Panc1 (cell line): ENCODE measurements at regions of chr19 and their contacts with region 1.

Region 1: GRCh38 chr19:8396563-8397203 is 6.5 kb downstream of the RAB11B start:
- DNase-seq: peak; percentile 18
- ATAC-seq: peak; percentile 63
- H3K4me3 ChIP-seq: no peak overlapping the region
- H3K27ac ChIP-seq: peak overlapping the region; percentile 75
- H3K4me1 ChIP-seq: peaks cover 62% of the 10 kb centered on the region
- H3K27me3 ChIP-seq: no peaks in the 10 kb centered on the region
- CTCF ChIP-seq: peak; percentile 85; the same call in 1 of the 2 replicates

Region 2: DNA sequence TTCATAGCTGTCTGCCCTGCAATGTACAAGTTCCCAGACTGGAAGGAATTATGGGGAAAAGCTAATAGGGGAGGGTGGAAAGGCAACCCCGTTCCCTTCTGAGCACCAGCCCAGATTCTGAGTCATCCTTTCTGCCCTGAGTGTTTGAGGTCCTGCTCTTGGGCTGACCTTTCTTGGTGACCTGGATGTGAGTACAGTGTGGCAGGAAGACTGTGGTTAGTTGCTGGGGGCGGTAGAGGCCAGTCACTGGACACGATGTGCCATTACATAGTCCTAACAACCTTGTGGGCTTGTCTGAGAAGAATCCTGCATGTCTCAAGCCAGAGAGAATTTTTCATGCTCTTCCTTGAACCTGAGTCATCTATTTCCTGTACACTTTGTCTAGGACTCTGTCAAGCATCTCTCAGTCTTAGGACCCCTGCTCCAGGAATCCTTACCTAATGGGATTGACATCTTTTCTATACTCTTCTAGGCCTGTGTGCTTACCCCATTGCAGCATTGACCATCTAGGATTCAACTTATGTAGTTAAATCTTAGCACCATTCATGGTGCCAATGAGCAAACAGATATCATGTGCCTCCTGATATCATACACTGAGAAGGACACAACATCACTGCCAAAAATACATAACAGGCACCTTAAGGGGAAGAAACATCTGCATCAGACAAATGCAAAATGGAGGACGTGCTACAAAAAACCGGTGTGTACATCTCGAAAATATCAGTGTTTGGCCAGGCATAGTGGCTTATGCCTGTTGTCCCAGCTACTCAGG is 40.9 kb before region 1 on chr19:
- CTCF ChIA-PET with region 1: interaction called, 22 read pairs
- POLR2A ChIA-PET with region 1: interaction called, 12 read pairs
- in situ Hi-C with region 1: no loop called
- intact Hi-C with region 1: loop called (anchors 1 kb)
- DNase-seq: peak; percentile 88
- ATAC-seq: peak; percentile 89
- H3K4me3 ChIP-seq: no peak overlapping the region
- H3K27ac ChIP-seq: peak overlapping the region; percentile 56
- H3K4me1 ChIP-seq: 0 out of 2 replicates have a peak, but pooled peaks cover 4% of the 10 kb centered on the region
- H3K27me3 ChIP-seq: no peaks in the 10 kb centered on the region
- CTCF ChIP-seq: no peak

Region 3: GRCh38 chr19:8451885-8452284 is 55.2 kb after region 1 on chr19:
- CTCF ChIA-PET with region 1: no interaction called
- POLR2A ChIA-PET with region 1: interaction called, 15 read pairs
- in situ Hi-C with region 1: no loop called
- intact Hi-C with region 1: no loop called
- DNase-seq: no peak
- ATAC-seq: peak; percentile 68
- H3K4me3 ChIP-seq: no peak overlapping the region
- H3K27ac ChIP-seq: no peak overlapping the region; the same call in 1 of the 2 replicates
- H3K4me1 ChIP-seq: peaks cover 61% of the 10 kb centered on the region
- H3K27me3 ChIP-seq: no peaks in the 10 kb centered on the region
- CTCF ChIP-seq: no peak